Naive thymus-derived CD4-positive, alpha-beta T cell (primary cell): ENCODE measurements at regions of chr4 and their contacts with region 1.

Region 1: DNA sequence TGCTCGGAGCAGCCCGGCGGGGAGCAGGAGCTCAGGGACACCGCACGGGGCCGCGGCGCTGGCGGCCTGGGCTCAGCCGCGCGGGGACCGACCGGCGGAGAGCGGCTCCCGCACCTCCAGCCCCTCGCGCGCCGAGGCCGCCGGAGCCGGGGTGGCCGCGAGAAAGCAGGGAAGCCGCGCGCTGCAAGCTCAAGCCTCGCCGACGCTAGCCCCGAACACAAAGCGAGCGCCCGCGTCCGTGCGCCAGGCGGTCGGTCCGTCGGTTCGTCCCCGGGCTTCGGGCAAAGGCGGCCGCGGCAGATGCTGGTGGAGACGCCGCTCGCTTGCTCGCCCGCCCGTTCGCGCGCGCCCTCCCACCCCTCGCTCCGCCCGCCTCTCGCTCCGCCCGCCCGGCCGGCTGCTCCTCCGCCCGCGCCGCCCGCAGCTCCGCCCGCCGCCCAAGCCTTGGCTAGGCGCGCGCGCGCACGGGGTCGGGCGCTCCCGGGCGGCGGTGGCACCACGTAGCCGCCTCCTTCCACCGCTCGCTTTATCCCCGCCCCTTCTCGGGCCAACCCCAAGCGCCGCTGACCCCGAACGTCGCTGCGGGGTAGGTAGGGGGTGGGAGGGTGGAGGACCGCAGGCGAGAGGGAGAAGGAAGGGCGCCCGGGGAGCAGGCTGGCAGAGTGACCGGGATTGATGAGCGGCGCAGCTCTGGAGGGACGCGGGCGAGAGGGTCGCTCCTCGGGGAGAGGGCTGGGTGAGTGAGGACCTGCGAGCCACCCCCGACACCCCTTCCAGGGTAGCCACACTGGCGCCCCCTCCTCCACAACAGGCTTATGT is at the start of gene TSPAN5:
- DNase-seq: peak; percentile 60 to 90 (median 75)
- ATAC-seq: peak; percentile 87
- H3K4me3 ChIP-seq: peak within 1 kb of the TSS; percentile 61
- H3K4me3 Mint-ChIP-seq: peak within 1 kb of the TSS; percentile 85 to 99 (median 92)
- H3K27ac ChIP-seq: peak within 1 kb of the TSS; percentile 65
- H3K27ac Mint-ChIP-seq: peak within 1 kb of the TSS; percentile 20 to 95 (median 84)
- H3K4me1 ChIP-seq: peaks cover 32 to 40% of the 10 kb centered on the region in 2 donors
- H3K4me1 Mint-ChIP-seq: peaks cover 56 to 87% (median 83%) of the 10 kb centered on the region in 7 donors
- H3K27me3 ChIP-seq: no peaks in the 10 kb centered on the region
- H3K27me3 Mint-ChIP-seq: no peaks in the 10 kb centered on the region
- total RNA-seq, gene TSPAN5: 3.3 to 31.6 (median 10.9) TPM

Region 2: DNA sequence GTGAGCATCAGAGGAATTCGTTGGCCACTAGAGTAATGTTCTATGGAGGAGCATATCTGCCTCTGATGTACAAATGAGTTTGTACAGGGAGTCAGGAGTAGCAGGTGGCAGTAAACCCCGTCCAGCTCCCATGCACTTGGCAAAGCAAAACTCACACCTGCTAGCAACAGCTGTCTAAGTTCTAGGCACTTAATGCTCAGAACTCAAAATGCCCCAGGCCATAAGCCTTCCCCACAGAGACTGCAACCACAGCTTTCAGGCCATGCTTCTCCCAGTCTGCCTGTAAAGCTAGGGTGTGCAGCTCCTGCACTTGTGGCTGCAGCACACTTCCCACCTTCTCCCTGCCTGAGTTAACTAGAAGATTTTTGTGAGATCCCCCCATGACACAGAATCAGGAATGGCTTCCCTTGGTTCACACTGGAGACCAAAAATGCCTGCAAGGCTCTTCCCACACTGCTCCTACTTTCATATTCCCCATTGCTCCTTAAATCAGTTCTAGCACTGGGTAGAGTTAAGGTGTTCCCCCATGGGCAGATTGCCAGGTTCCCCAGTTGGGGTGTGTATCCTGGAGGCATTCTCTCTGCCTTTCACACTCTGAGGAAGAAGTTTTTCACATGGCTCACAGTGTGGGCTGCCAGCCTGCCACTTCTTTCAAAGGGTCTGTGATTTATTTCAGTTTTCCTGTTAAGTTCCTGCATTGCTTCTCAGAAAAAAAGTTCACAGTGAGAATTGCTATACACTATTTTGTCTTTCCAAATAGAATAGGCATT is 705.1 kb before region 1 on chr4:
- CTCF ChIA-PET with region 1: no interaction called
- POLR2A ChIA-PET with region 1: no interaction called
- intact Hi-C with region 1: no loop called
- DNase-seq: no peak
- ATAC-seq: no peak
- H3K4me3 ChIP-seq: no peak overlapping the region
- H3K4me3 Mint-ChIP-seq: no peak overlapping the region
- H3K27ac ChIP-seq: no peak overlapping the region
- H3K27ac Mint-ChIP-seq: no peak overlapping the region
- H3K4me1 ChIP-seq: no peaks in the 10 kb centered on the region
- H3K4me1 Mint-ChIP-seq: no peaks in the 10 kb centered on the region
- H3K27me3 ChIP-seq: no peaks in the 10 kb centered on the region
- H3K27me3 Mint-ChIP-seq: peaks cover 0 to 7% (median 4%) of the 10 kb centered on the region in 5 donors

Region 3: GRCh38 chr4:98143001-98143899 is 515.2 kb before region 1 on chr4 and contains the start of gene STPG2:
- CTCF ChIA-PET with region 1: no interaction called
- POLR2A ChIA-PET with region 1: no interaction called
- intact Hi-C with region 1: loop called (anchors 1 to 2 kb)
- DNase-seq: peak; percentile 85 to 93 (median 91)
- ATAC-seq: peak; percentile 100
- H3K4me3 ChIP-seq: peak within 1 kb of the TSS; percentile 85
- H3K4me3 Mint-ChIP-seq: peak within 1 kb of the TSS; percentile 87 to 99 (median 94)
- H3K27ac ChIP-seq: peak within 1 kb of the TSS; percentile 84
- H3K27ac Mint-ChIP-seq: peak within 1 kb of the TSS; percentile 96 to 99 (median 98)
- H3K4me1 ChIP-seq: peaks cover 6 to 10% of the 10 kb centered on the region in 2 donors
- H3K4me1 Mint-ChIP-seq: peaks cover 12 to 28% (median 24%) of the 10 kb centered on the region in 7 donors
- H3K27me3 ChIP-seq: no peaks in the 10 kb centered on the region
- H3K27me3 Mint-ChIP-seq: peaks cover 0 to 16% (median 0%) of the 10 kb centered on the region in 5 donors
- total RNA-seq, gene STPG2: 0.19 to 0.47 (median 0.30) TPM in 4 of 5 experiments, not detected in the other

Region 4: DNA sequence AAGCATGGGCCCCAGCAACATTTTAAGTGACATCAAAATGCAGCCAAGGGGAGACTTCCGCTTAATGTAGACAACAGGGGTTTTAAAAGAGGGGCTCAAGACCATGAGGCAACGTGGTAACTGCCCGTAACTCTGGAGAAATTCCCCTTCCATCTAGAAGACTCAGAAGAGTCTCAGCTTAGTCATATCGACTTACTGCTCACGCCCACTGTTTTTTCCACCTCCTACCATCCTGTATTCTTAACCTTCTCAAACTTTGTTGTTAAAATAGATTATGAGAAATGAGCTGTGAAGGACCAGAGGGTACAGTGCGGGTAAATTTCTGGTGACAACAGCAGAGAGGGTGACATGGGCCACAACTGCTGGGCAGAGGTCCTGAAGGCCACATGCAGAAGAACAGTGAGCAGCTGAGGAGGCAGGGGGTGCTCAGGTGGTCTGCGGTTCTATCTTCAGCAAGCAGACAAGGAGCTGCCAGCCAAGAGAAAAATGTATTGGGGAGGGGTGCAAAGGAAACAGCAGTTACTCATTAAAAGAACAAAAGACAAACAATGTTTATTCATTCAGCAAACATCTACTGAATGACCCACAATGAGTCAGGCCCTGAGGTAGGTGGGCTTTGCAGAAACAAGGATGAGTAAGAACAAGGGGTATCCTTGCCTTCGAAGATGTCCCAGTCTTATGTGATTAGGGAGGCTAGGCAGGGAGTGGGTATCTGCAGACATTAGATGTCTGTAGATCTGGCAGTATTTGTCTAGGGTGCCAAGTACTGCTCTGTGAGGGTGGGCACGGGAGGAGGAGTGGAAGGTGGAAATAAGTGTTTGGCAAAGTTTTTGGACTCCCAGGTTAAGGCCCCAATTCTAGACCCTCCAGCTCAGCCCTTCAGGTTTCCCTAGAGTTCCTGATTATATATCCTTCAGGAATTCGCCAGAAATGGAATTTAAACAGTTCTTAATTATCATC is 175.4 kb before region 1 on chr4:
- CTCF ChIA-PET with region 1: no interaction called
- POLR2A ChIA-PET with region 1: no interaction called
- intact Hi-C with region 1: loop called in 1 of 2 experiments (anchors 2 kb)
- DNase-seq: peak in 1 of 9 donors; percentile 58
- ATAC-seq: no peak
- H3K4me3 ChIP-seq: no peak overlapping the region
- H3K4me3 Mint-ChIP-seq: peak overlapping the region in 5 of 10 donors; percentile 14 to 67 (median 24)
- H3K27ac ChIP-seq: no peak overlapping the region
- H3K27ac Mint-ChIP-seq: peak overlapping the region in 7 of 9 donors; percentile 25 to 91 (median 60)
- H3K4me1 ChIP-seq: no peaks in the 10 kb centered on the region
- H3K4me1 Mint-ChIP-seq: peaks cover 6 to 84% (median 41%) of the 10 kb centered on the region in 7 donors
- H3K27me3 ChIP-seq: no peaks in the 10 kb centered on the region
- H3K27me3 Mint-ChIP-seq: no peaks in the 10 kb centered on the region

Region 5: GRCh38 chr4:98501383-98501782 is 157.1 kb before region 1 on chr4:
- CTCF ChIA-PET with region 1: no interaction called
- POLR2A ChIA-PET with region 1: no interaction called
- intact Hi-C with region 1: no loop called
- DNase-seq: no peak
- ATAC-seq: no peak
- H3K4me3 ChIP-seq: no peak overlapping the region
- H3K4me3 Mint-ChIP-seq: no peak overlapping the region
- H3K27ac ChIP-seq: no peak overlapping the region
- H3K27ac Mint-ChIP-seq: peak overlapping the region in 2 of 9 donors; percentile 12 to 28
- H3K4me1 ChIP-seq: no peaks in the 10 kb centered on the region
- H3K4me1 Mint-ChIP-seq: peaks cover 0 to 26% (median 7%) of the 10 kb centered on the region in 7 donors
- H3K27me3 ChIP-seq: no peaks in the 10 kb centered on the region
- H3K27me3 Mint-ChIP-seq: no peaks in the 10 kb centered on the region

Region 6: DNA sequence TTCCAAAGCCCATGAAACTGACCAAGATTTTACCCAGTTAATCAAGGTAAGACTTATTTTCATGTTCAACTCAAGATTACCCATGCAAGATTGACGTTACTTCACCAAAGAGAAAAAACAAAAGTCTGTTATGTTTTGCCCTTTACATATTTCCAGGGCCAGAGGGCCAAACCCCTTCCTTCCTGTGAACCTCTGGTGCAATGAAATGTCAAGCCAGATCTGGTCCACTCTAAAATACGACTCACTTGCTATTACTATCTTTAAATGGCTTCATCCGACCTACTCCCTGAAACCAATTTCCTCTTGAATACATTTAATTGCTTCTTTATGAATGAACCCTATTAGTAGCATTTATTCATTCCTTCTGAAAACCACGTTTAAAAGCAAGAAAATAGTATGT is 33.1 kb before region 1 on chr4:
- CTCF ChIA-PET with region 1: no interaction called
- POLR2A ChIA-PET with region 1: interaction called, 6 read pairs
- intact Hi-C with region 1: loop called in 1 of 2 experiments (anchors 2 kb)
- DNase-seq: no peak
- ATAC-seq: no peak
- H3K4me3 ChIP-seq: no peak overlapping the region
- H3K4me3 Mint-ChIP-seq: peak overlapping the region in 3 of 10 donors; percentile 6 to 38 (median 8)
- H3K27ac ChIP-seq: no peak overlapping the region
- H3K27ac Mint-ChIP-seq: peak overlapping the region in 3 of 9 donors; percentile 28 to 60 (median 29)
- H3K4me1 ChIP-seq: no peaks in the 10 kb centered on the region
- H3K4me1 Mint-ChIP-seq: peaks cover 22 to 76% (median 48%) of the 10 kb centered on the region in 7 donors
- H3K27me3 ChIP-seq: no peaks in the 10 kb centered on the region
- H3K27me3 Mint-ChIP-seq: no peaks in the 10 kb centered on the region

Region 7: GRCh38 chr4:98706200-98706813 is 47.8 kb after region 1 on chr4:
- CTCF ChIA-PET with region 1: no interaction called
- POLR2A ChIA-PET with region 1: no interaction called
- intact Hi-C with region 1: loop called (anchors 1 to 2 kb)
- DNase-seq: peak in 7 of 9 donors; percentile 21 to 76 (median 71)
- ATAC-seq: peak; percentile 96
- H3K4me3 ChIP-seq: peak overlapping the region; percentile 37
- H3K4me3 Mint-ChIP-seq: peak overlapping the region; percentile 74 to 87 (median 80)
- H3K27ac ChIP-seq: no peak overlapping the region
- H3K27ac Mint-ChIP-seq: peak overlapping the region; percentile 40 to 93 (median 81)
- H3K4me1 ChIP-seq: peaks cover 29 to 30% of the 10 kb centered on the region in 2 donors
- H3K4me1 Mint-ChIP-seq: peaks cover 24 to 50% (median 41%) of the 10 kb centered on the region in 7 donors
- H3K27me3 ChIP-seq: no peaks in the 10 kb centered on the region
- H3K27me3 Mint-ChIP-seq: no peaks in the 10 kb centered on the region

Region 8: DNA sequence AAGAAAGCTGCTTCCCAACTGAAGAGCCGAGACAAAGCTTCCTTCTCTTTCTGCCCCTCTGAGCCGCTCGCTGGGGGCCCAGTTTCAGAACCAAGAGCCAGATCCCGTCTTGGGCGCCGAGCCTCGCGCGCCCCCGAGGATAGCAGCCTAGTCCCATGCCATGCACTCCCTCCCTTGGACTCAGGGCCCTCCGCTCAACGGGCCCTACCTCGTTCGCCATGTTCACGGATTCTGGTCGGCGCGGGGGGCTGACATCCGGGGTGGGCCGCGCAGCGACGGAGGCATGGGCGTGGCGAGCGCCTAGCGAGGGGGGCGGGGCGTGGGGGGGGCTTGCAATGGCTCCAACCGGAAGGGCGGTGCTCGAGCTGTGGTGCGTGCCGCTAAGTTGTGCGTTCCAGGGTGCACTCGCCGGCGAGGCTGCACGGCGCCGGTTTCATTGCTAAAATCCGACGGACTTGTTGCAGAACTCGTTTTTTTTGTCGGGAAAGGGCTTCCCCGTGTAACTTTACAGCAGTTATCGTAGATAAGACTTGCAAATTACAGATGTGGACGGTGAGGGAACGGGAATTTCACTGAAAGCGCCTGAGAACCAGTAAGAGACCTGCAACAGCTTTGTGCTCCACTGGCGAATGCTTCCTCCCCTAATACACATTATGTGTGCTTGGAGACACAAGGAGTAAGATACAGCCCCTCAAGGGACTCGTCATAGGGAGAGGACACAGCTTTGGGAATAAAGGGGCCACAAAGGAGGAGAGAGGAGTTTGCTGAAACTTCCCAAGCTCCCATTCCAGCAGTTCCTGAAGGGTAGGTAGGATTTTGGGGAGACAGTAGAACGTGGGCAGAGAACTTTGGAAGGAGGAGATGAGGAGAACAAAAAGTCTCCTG is 430.2 kb after region 1 on chr4 and contains the start of gene ADH5:
- CTCF ChIA-PET with region 1: no interaction called
- POLR2A ChIA-PET with region 1: no interaction called
- intact Hi-C with region 1: loop called (anchors 1 kb)
- DNase-seq: peak; percentile 75 to 90 (median 85)
- ATAC-seq: peak; percentile 98
- H3K4me3 ChIP-seq: peak within 1 kb of the TSS; percentile 98
- H3K4me3 Mint-ChIP-seq: peak within 1 kb of the TSS; percentile 93 to 99 (median 98)
- H3K27ac ChIP-seq: peak within 1 kb of the TSS; percentile 85
- H3K27ac Mint-ChIP-seq: peak within 1 kb of the TSS; percentile 94 to 99 (median 98)
- H3K4me1 ChIP-seq: peaks cover 8 to 9% of the 10 kb centered on the region in 2 donors
- H3K4me1 Mint-ChIP-seq: peaks cover 28 to 67% (median 57%) of the 10 kb centered on the region in 7 donors
- H3K27me3 ChIP-seq: no peaks in the 10 kb centered on the region
- H3K27me3 Mint-ChIP-seq: peaks cover 0 to 11% (median 0%) of the 10 kb centered on the region in 5 donors
- total RNA-seq, gene ADH5: 42.7 to 102 (median 74.0) TPM

Region 9: DNA sequence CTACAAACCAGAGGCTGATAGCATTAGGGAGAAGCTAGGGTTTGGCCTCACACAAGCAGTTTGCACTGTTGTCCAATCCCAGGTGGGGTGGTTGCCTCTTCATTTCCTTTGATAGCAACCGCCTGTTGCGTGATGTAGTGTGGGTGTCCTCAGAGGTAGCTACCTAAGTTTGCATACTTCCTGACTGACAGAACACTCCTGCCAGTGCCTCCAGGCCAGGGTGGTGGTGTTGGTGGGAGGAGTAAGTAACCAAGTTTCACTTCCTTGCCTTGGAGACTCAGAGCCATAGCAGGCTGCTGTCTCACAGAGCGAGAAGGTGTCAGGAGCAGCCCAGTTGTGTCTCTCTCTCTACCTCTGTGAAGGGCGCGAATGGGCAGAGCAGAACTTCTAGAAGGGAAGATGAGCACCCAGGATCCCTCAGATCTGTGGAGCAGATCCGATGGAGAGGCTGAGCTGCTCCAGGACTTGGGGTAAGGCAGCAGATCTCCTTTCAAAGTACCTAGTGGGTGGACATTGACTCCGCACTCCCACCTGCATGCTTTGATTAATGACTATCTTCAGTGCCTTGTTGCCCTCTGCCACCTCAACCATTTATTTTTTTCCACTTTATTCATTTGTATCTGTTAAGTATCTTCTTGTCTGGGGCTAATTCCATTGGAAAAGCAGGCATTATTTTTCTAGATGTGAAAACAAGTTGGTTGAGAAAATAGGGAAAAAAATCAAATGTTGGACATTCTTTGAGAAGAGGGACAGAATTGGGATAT is 1158.2 kb after region 1 on chr4 and contains the start of gene DAPP1:
- CTCF ChIA-PET with region 1: no interaction called
- POLR2A ChIA-PET with region 1: no interaction called
- intact Hi-C with region 1: loop called in 1 of 2 experiments (anchors 10 kb)
- DNase-seq: peak; percentile 44 to 88 (median 84)
- ATAC-seq: peak; percentile 95
- H3K4me3 ChIP-seq: peak within 1 kb of the TSS; percentile 71
- H3K4me3 Mint-ChIP-seq: peak within 1 kb of the TSS; percentile 71 to 95 (median 92)
- H3K27ac ChIP-seq: peak within 1 kb of the TSS; percentile 77
- H3K27ac Mint-ChIP-seq: peak within 1 kb of the TSS; percentile 87 to 98 (median 96)
- H3K4me1 ChIP-seq: peaks cover 16 to 32% of the 10 kb centered on the region in 2 donors
- H3K4me1 Mint-ChIP-seq: peaks cover 41 to 72% (median 63%) of the 10 kb centered on the region in 7 donors
- H3K27me3 ChIP-seq: no peaks in the 10 kb centered on the region
- H3K27me3 Mint-ChIP-seq: no peaks in the 10 kb centered on the region
- total RNA-seq, gene DAPP1: 10.9 to 49.6 (median 20.7) TPM